Activated CD4-positive, alpha-beta T cell treated with anti-CD3 and anti-CD28 coated beads for 36 hours (primary cell): ENCODE measurements at regions of chr3 and their contacts with region 1.

Region 1: DNA sequence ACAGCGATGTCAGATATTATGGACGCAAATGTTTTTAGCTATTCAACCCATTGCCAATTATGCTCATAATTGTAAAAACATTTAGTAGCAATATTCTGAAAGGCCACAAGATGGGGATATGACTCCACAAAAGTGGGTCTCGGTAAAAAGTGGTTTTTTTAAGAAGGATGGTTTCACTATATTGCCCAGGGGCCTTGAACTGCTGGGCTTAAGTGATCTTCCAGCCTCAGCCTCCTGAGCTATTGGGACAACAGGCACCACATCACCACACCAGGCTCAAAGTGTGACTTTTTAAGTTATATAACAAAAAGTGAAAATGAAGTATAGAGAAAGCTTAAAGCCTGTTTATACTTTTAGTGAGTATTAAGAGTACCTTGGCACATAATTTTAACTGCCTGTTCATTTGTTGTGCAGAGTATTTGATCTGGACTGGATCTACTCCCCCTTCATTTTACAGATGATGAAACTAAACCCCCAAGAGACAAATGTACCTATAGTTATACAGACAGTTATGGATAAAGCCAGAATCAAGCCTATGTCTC is 9.4 kb downstream of the NAA50 start:
- DNase-seq: peak; percentile 25
- ATAC-seq: peak; percentile 86
- H3K4me3 Mint-ChIP-seq: no peak overlapping the region
- H3K27ac Mint-ChIP-seq: peak overlapping the region; percentile 74
- H3K4me1 Mint-ChIP-seq: peaks cover 67% of the 10 kb centered on the region
- H3K27me3 Mint-ChIP-seq: no peaks in the 10 kb centered on the region

Region 2: GRCh38 chr3:113721636-113722035 is 15.0 kb before region 1 on chr3:
- CTCF ChIA-PET with region 1: interaction called, 43 read pairs
- POLR2A ChIA-PET with region 1: no interaction called
- intact Hi-C with region 1: no loop called
- DNase-seq: no peak
- ATAC-seq: no peak
- H3K4me3 Mint-ChIP-seq: no peak overlapping the region
- H3K27ac Mint-ChIP-seq: peak overlapping the region; percentile 15
- H3K4me1 Mint-ChIP-seq: peaks cover 26% of the 10 kb centered on the region
- H3K27me3 Mint-ChIP-seq: no peaks in the 10 kb centered on the region

Region 3: DNA sequence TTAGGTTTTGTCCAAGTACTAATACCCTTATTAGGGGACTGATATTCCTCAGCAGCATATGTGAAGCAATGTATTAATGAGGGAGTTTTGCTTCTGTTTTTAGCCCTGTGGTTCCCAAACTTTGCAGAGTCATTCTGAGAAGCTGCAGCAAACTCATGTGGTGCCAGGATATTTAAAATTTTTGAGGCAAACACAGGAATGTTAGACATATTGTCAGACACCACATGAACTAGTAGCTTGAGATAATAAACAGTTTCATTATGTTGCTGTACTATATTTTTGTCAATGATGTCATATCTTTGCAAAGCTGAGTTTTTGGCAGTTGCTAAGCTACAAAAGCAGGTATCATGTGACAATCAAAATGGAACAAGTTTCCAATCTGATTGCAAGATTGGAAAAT is 46.8 kb after region 1 on chr3:
- CTCF ChIA-PET with region 1: interaction called, 10 read pairs
- POLR2A ChIA-PET with region 1: no interaction called
- intact Hi-C with region 1: no loop called
- DNase-seq: no peak
- ATAC-seq: peak; percentile 44
- H3K4me3 Mint-ChIP-seq: no peak overlapping the region
- H3K27ac Mint-ChIP-seq: no peak overlapping the region
- H3K4me1 Mint-ChIP-seq: peaks cover 3% of the 10 kb centered on the region
- H3K27me3 Mint-ChIP-seq: no peaks in the 10 kb centered on the region

Region 4: DNA sequence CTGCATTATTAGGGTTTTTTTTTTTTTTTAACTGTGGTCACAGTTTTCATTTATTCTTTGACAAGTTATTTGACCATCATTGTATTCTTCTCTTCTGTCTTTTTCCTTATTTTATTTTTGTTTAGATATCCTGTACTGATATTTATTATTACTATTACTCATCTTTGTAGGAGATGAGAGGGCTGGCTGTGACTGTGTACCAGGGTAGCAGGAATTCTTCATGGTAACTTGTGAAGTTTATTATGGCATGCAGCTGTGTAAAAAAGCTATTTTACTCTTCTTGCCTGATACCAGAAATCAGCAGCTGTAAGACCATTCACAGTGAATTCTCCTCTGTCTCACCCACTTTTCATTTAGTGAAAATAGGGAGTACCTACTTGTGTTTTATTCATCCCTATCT is 54.8 kb after region 1 on chr3:
- CTCF ChIA-PET with region 1: interaction called, 12 read pairs
- POLR2A ChIA-PET with region 1: no interaction called
- intact Hi-C with region 1: no loop called
- DNase-seq: no peak
- ATAC-seq: no peak
- H3K4me3 Mint-ChIP-seq: no peak overlapping the region
- H3K27ac Mint-ChIP-seq: no peak overlapping the region
- H3K4me1 Mint-ChIP-seq: no peaks in the 10 kb centered on the region
- H3K27me3 Mint-ChIP-seq: no peaks in the 10 kb centered on the region

Region 5: DNA sequence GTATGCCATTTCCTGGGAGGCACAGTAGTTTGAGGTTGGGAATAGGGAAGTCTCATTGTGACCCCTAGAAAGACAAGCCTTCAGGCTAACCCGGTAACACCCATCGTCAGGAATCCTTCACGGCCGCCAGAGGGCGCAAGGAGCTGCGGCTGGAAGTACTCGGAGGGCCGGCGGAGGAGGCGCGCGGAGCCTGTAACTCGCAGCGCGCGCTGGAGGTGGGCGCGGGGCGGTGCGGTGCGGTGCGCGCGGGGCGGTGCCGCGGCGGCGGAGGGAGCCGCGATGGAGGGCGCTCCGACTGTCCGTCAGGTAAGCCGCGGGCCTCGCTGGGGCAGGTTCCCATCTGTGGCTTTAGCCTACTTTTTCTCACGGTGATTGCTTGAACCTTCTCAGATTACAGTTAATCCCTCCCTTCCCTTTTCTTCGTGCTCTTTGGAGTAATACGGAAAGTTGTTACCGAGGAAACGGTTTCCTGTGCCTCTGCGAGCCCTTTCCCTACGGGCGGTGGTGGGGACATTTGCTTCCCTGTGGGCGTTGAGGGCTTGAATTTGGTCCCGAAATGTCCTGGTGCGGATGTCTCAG is 102.1 kb after region 1 on chr3 and contains the start of gene GRAMD1C:
- CTCF ChIA-PET with region 1: interaction called, 8 read pairs
- POLR2A ChIA-PET with region 1: interaction called, 7 read pairs
- intact Hi-C with region 1: loop called (anchors 1 to 5 kb)
- DNase-seq: peak; percentile 92
- ATAC-seq: peak; percentile 98
- H3K4me3 Mint-ChIP-seq: peak within 1 kb of the TSS; percentile 73
- H3K27ac Mint-ChIP-seq: no peak within 1 kb of the TSS
- H3K4me1 Mint-ChIP-seq: peaks cover 8% of the 10 kb centered on the region
- H3K27me3 Mint-ChIP-seq: peaks cover 3% of the 10 kb centered on the region
- total RNA-seq, gene GRAMD1C: 0.87 to 0.97 TPM

Region 6: GRCh38 chr3:113844622-113845222 is 108.1 kb after region 1 on chr3:
- CTCF ChIA-PET with region 1: interaction called, 18 read pairs
- POLR2A ChIA-PET with region 1: no interaction called
- intact Hi-C with region 1: loop called in 1 of 2 experiments (anchors 5 kb)
- DNase-seq: no peak
- ATAC-seq: no peak
- H3K4me3 Mint-ChIP-seq: no peak overlapping the region
- H3K27ac Mint-ChIP-seq: no peak overlapping the region
- H3K4me1 Mint-ChIP-seq: no peaks in the 10 kb centered on the region
- H3K27me3 Mint-ChIP-seq: no peaks in the 10 kb centered on the region

Region 7: DNA sequence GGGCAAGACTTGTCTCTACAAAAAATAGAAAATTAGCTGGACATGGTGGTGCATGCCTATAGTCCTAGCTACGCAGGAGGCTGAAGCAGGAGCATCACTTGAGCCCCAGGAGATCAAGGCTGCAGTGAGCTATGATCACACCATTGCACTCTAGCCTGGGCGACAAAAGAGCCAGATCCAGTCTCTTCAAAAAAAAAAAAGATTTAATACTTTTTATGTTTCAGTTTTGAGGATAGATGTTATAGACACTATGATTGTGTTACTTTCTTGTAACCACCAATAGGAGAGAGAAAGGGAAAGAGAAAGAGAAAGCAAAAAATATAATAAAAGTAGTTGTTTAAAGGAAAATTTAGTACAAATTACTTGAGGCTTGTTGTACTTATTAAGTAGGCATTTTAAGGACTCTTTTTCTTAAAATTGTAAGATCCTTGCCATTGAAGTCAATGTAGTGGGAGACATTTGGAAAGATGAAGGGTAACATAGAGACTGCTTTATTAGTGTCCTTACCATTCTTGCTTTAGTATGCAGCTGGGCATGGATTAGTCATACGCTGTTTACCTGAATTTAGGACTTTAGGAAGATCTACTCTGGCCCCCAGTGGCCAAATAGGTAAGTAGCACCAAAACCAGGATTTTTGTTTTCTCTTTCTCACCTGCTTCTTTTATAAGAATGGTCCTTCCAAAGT is 176.1 kb after region 1 on chr3:
- CTCF ChIA-PET with region 1: interaction called, 9 read pairs
- POLR2A ChIA-PET with region 1: no interaction called
- intact Hi-C with region 1: loop called (anchors 1 kb)
- DNase-seq: peak; percentile 47
- ATAC-seq: peak; percentile 91
- H3K4me3 Mint-ChIP-seq: peak overlapping the region; percentile 15
- H3K27ac Mint-ChIP-seq: no peak overlapping the region
- H3K4me1 Mint-ChIP-seq: peaks cover 5% of the 10 kb centered on the region
- H3K27me3 Mint-ChIP-seq: no peaks in the 10 kb centered on the region